Esophagus muscularis mucosa (tissue), 4 donors: ENCODE measurements at regions of chr16 and their contacts with region 1.

Region 1: DNA sequence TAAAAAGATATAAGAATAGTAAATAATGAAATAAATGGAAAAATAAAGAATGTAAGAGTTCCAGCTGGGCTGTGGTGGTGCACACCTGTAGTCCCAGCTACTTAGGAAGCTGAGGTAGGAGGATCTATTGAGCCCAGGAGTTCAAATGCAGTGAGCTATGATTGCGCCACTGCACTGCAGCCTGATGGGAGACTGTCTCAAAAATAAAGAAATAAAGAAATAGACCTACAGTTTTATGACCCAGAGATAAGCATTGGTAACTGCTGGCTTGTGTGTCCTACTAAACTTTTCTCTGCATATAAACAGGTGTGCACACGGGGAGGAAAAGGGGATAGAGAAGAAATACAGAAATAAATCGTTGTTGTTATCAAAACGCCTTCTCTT is 7.8 kb upstream of the PDP2 start:
- DNase-seq: no peak
- H3K4me3 ChIP-seq: peak overlapping the region; percentile 37 to 51 (median 44)
- H3K27ac ChIP-seq: peak overlapping the region in 3 of 4 donors; percentile 18 to 35 (median 34)
- H3K4me1 ChIP-seq: peaks cover 6 to 23% (median 15%) of the 10 kb centered on the region in 4 donors
- H3K27me3 ChIP-seq: no peaks in the 10 kb centered on the region
- CTCF ChIP-seq: no peak
- EP300 ChIP-seq: no peak
- POLR2A ChIP-seq: no peak

Region 2: DNA sequence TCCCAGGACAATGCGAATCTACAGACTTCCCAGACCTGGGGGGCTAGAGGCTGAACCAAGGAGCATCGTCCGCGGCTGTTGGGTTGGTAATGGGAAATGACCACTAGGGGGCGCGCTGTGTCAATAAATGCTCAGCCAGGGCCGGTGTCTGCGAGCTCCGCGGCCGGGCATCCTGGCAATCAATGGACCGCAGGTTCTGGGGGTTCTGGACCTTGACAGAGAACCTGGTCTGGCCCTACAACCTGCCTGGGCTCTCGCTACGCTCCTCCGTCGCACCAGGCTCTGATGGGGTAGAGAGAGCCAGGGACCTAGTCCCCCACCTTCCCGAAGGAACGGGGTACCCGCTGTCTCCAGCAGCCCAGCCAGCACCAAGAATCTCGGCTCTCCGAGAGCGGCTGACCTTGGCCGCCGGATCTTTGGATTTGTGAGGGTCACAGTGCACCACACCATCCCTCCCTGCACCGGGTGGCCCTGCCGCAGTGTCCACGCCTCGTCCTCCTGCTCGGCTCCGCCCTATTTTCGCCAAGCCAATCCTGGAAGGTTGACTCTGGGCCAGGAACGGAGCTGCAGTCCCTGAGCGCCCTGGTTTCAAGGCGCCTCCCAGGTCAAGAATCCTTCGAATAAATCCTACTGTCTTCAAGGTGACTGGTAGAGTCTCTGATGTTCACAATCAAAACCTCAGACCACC is 465.9 kb before region 1 on chr16:
- intact Hi-C with region 1: loop called (anchors 5 kb)
- DNase-seq: peak; percentile 98
- H3K4me3 ChIP-seq: peak overlapping the region; percentile 52 to 63 (median 54)
- H3K27ac ChIP-seq: peak overlapping the region in 2 of 4 donors; percentile 35 to 51
- H3K4me1 ChIP-seq: peaks cover 12 to 20% (median 17%) of the 10 kb centered on the region in 4 donors
- H3K27me3 ChIP-seq: peaks cover 0 to 20% (median 0%) of the 10 kb centered on the region in 4 donors
- CTCF ChIP-seq: peak; percentile 83 to 89 (median 86)
- EP300 ChIP-seq: no peak
- POLR2A ChIP-seq: no peak

Region 3: DNA sequence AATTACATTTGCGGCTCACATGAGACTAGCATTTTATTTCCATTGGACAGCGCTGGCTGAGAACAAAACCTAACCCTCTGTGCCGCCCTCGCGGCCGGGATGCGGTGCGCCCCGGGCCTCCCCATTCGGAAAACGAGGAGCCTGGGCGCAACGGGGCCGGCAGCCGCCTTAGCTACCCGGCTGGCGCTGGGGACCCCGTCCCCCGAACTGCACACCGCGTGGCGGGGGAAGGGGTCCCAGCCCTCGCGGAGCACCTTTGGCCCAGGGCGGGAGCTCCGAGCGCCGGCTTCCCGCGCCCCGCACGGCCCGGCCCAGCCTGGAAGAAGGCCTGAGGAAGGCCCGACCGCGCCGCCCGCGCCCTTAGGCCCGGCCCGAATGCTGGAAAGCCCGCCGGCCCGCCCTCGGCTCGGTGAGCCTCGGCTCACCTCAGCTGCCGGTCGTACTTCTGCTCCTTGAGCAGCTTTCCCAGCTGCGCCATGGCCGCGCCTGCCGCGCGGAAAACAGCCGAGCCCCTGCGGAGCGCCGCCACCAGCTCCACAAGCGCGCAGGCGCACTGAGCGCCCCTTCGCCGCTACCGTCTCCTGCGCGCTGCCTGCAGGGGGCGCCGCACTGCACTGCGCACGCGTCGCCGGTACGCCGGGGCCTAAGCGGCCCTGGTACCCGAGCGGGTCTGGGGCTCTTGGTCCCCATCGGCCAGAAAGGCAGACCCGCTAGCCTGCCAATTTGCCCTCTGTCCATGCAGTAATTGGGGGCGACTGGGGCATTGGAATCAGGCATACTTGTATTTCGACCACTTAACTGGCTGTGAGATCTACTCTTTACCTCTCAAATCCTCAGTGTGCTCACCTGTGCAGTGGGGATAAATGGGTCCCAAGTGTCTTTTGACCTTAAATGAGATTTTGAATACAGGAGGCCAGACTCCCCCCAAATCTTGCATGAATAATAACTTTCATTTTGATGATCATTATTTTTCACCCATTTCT is 41.8 kb before region 1 on chr16 and contains the start of gene NAE1:
- intact Hi-C with region 1: loop called (anchors 2 kb)
- DNase-seq: no peak
- H3K4me3 ChIP-seq: peak within 1 kb of the TSS; percentile 78 to 96 (median 84)
- H3K27ac ChIP-seq: peak within 1 kb of the TSS; percentile 89 to 96 (median 92)
- H3K4me1 ChIP-seq: peaks cover 10 to 36% (median 25%) of the 10 kb centered on the region in 4 donors
- H3K27me3 ChIP-seq: no peaks in the 10 kb centered on the region
- CTCF ChIP-seq: peak; percentile 94 to 99 (median 96)
- EP300 ChIP-seq: no peak
- POLR2A ChIP-seq: peak; percentile 59
- total RNA-seq, gene NAE1: 32.7 to 50.7 (median 42.4) TPM

Region 4: GRCh38 chr16:67063008-67063407 is 190.5 kb after region 1 on chr16:
- intact Hi-C with region 1: no loop called
- DNase-seq: no peak
- H3K4me3 ChIP-seq: no peak overlapping the region
- H3K27ac ChIP-seq: no peak overlapping the region
- H3K4me1 ChIP-seq: no peaks in the 10 kb centered on the region
- H3K27me3 ChIP-seq: no peaks in the 10 kb centered on the region
- CTCF ChIP-seq: no peak
- EP300 ChIP-seq: no peak
- POLR2A ChIP-seq: no peak